ENCODE measurements at regions of chr22 and their contacts with region 1.

Region 1: DNA sequence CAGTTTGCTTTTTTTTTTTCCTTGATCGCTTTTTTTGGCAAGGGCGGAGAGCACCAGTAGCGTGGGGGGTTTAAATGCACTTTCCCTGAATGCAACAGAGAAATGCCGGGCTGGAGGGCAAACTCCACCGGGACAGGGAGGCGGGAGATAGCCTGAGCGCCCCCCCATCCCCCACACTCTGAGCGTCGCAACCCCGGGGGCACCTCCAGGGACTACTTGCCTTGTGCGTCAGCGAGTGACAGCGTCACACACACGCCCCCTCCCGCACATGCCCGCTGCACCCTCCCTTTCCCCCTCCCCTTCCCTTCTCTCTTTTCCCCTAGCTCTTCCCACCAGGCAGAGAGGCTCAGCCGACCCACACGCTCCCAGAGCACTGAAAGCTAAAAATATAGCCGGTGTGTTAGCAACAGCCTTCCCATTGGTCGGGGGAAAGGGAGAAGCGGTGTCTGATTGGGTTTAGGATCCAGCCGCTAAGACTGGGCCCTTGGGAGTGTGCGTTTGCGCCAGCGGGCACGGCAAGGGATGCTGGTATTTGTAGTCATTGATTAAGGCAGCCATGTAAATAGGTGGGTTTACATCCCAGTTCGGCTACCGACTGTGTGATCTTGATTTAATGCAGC is 1.7 kb upstream of the TOB2 start:
- DNase-seq: peak; percentile 91

Region 2: DNA sequence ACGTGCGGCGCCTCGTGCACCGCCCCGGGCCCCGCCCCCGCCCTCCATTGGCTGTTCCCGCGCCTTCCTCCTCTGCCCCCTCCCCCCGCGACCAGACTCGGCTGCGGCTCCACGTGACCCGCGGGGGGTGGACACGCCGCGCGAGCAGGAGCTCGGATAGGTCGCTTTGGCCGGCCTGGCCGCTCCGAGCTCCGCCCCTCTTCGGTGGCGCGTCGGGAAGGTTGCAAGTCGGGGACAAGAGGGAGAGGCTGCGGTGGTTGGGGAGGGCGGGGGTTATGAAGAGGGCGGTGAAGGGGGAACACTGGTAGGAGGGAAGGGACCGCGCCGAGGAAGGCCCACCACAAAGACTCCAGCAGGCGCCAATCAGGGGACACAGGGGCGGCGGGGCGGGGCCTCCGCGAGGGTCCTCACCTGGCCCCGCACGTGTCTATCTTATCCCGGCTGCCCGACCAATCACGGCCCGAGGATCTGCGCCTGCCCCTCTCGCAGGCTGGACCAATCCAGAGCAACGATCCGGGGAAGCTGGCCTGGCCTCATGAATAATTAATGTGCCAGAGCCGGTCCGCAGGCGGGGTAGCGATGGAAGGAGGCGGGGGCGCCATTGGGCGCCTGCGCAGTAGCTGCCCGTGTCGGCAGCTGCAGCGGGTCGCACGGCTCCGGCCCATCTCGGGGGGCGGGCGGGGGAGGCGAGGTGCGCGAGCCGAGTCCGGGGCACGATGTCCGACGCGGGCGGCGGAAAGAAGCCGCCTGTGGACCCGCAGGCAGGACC is 66.8 kb before region 1 on chr22 and contains the start of gene TEF:
- CTCF ChIA-PET with region 1: no interaction called
- POLR2A ChIA-PET with region 1: interaction called, 43 read pairs
- DNase-seq: peak; percentile 99

Region 3: GRCh38 chr22:41417622-41418390 is 30.5 kb before region 1 on chr22:
- CTCF ChIA-PET with region 1: interaction called, 4 read pairs
- POLR2A ChIA-PET with region 1: interaction called, 14 read pairs
- DNase-seq: no peak

Region 4: GRCh38 chr22:41436322-41437113 is 11.8 kb before region 1 on chr22:
- CTCF ChIA-PET with region 1: no interaction called
- POLR2A ChIA-PET with region 1: interaction called, 37 read pairs
- DNase-seq: no peak

Region 5: DNA sequence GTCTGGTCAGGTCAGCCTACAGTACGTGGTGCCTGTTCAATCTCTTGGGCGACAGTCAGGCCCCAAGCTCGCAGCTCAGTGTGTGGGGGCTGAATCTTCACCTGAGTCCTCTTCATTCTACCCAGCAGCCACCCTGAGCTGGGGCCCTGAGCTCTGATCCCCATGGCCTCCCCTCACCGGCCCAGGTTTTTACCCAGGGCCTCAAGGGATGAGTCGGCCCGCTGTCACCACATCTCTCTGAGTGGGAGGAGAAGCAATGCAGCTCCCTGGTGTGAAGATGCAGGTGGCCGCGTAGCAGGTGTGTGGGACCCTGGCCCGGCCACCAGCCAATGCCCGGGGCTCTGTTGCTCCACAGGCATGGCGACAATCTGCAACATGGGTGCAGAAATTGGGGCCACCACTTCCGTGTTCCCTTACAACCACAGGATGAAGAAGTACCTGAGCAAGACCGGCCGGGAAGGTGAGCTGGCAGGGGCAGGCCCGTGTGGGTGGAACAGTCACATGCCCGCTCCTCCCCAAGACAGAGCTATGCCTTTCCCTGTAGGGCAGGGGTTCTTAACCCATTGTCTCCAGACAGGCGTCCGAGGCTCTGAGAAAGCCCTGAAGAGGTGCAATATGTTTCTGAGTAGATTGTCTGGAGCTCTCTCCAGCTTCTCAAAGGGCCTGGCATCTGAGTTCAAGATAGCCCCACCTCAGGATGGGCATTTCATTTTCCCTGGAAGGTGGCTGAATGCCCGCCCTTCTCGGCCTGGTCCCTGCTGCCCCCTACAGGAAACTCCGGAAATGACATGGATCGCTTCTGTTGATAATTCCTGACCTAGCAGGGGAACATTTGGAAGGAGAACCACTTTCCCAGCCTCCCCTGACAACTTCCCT is 69.1 kb after region 1 on chr22:
- CTCF ChIA-PET with region 1: interaction called, 5 read pairs
- POLR2A ChIA-PET with region 1: interaction called, 11 read pairs
- DNase-seq: peak; percentile 81

Measured in HEK293T (cell line).